ENCODE measurements at regions of chr2 and their contacts with region 1.

Region 1: GRCh38 chr2:73985308-73986084 is 786 bp downstream of the TET3 start:
- DNase-seq: peak in 4 of 5 donors; percentile 47 to 76 (median 52)
- H3K4me3 ChIP-seq: peak overlapping the region; percentile 52 to 73
- H3K4me3 Mint-ChIP-seq: peak overlapping the region; percentile 81 to 92 (median 84)
- H3K27ac ChIP-seq: peak overlapping the region; percentile 75
- H3K27ac Mint-ChIP-seq: peak overlapping the region; percentile 34 to 96 (median 87)
- H3K4me1 ChIP-seq: peaks cover 76% of the 10 kb centered on the region
- H3K4me1 Mint-ChIP-seq: peaks cover 59 to 85% (median 70%) of the 10 kb centered on the region in 4 donors
- H3K27me3 ChIP-seq: no peaks in the 10 kb centered on the region
- H3K27me3 Mint-ChIP-seq: no peaks in the 10 kb centered on the region

Region 2: DNA sequence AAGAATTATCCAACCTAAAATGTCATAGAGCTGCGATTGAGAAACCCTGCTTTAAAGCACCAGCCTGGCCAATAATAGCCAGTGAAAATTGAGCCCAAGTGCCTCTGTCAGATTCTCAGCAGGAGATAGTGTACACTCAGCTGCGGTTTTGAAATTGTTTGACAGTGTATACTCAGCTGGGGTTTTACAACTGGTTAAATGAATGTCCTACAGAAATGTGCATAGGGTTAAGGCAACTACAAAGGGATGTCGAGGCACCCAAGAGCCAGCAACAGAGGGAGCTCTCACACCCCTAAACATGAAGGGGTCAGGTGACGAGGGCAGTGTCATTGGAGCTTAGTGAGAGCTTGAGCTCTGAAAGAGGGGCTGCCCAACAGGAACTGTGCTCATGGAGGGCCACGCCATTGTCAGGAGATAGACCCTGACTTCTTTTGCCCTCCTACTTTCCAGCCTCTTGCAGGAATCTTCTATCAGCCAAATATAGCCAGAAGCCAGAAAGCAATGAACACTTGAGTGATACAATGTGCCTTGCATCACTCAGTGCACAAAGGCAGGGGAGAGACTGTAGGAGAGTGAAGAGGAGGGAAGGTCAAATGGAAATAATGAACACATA is 77.5 kb before region 1 on chr2:
- CTCF ChIA-PET with region 1: interaction called, 71 read pairs
- POLR2A ChIA-PET with region 1: interaction called, 13 read pairs
- intact Hi-C with region 1: loop called (anchors 1 kb)
- DNase-seq: peak in 4 of 5 donors; percentile 52 to 54 (median 53)
- H3K4me3 ChIP-seq: no peak overlapping the region
- H3K4me3 Mint-ChIP-seq: no peak overlapping the region
- H3K27ac ChIP-seq: no peak overlapping the region
- H3K27ac Mint-ChIP-seq: peak overlapping the region in 2 of 7 donors; percentile 62 to 72
- H3K4me1 ChIP-seq: no peaks in the 10 kb centered on the region
- H3K4me1 Mint-ChIP-seq: peaks cover 0 to 2% (median 0%) of the 10 kb centered on the region in 4 donors
- H3K27me3 ChIP-seq: no peaks in the 10 kb centered on the region
- H3K27me3 Mint-ChIP-seq: no peaks in the 10 kb centered on the region

Region 3: DNA sequence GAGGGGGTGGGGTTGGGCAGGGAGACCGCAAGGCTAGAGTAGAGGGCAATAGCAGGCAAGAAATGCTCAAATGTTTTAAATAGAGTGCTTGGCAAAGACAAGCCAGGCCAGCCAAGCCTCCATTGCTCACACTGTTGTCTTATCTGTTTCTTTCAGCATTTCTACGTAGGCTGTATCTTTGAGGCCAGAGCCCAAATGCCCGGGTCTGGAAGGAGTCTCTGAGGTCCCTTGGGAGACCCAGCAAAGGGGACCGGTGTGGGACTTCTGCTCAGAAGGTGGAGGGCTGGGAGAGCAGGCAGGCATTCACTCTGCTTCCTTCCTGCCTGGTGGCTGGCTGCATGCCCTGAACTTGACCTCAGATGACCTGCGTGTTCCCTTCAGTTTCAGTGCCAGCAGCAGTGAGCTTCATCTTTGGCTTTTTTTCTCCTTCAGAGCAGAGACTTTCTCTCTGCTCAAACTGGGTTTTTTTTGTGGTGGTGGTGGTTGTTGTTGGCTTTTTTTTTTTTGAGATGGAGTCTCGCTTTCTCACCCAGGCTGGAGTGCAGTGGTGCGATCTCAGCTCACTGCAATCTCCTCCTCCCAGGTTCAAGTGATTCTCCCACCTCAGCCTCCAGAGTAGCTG is 14.5 kb before region 1 on chr2:
- CTCF ChIA-PET with region 1: interaction called, 23 read pairs
- POLR2A ChIA-PET with region 1: interaction called, 14 read pairs
- intact Hi-C with region 1: loop called (anchors 2 kb)
- DNase-seq: peak; percentile 69 to 74 (median 71)
- H3K4me3 ChIP-seq: peak overlapping the region; percentile 32 to 33
- H3K4me3 Mint-ChIP-seq: peak overlapping the region; percentile 64 to 84 (median 74)
- H3K27ac ChIP-seq: peak overlapping the region; percentile 17
- H3K27ac Mint-ChIP-seq: peak overlapping the region; percentile 81 to 96 (median 91)
- H3K4me1 ChIP-seq: peaks cover 28% of the 10 kb centered on the region
- H3K4me1 Mint-ChIP-seq: peaks cover 26 to 55% (median 40%) of the 10 kb centered on the region in 4 donors
- H3K27me3 ChIP-seq: no peaks in the 10 kb centered on the region
- H3K27me3 Mint-ChIP-seq: no peaks in the 10 kb centered on the region

Region 4: DNA sequence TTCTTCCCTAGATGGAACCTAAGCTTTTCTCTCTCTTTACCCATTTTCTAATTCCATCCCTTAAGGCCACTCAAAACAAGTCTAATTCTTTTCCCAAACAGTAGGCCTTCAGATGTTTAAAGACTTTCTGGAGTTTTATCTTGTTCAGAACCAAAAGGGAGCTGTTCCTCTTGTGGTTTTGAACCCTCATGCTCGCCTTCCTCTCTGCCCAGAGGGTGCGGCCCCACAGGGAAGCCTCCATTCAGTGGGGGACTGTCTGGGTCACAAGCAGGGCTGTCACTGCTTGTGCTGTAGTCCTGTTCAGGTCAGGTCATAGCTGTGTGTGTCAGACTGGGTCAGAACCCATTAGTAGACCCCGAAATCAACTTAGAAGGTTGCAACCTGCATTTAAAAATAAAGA is 55.7 kb after region 1 on chr2:
- CTCF ChIA-PET with region 1: no interaction called
- POLR2A ChIA-PET with region 1: no interaction called
- intact Hi-C with region 1: no loop called
- DNase-seq: no peak
- H3K4me3 ChIP-seq: no peak overlapping the region
- H3K4me3 Mint-ChIP-seq: no peak overlapping the region
- H3K27ac ChIP-seq: no peak overlapping the region
- H3K27ac Mint-ChIP-seq: peak overlapping the region in 5 of 7 donors; percentile 54 to 84 (median 76)
- H3K4me1 ChIP-seq: peaks cover 55% of the 10 kb centered on the region
- H3K4me1 Mint-ChIP-seq: peaks cover 49 to 66% (median 62%) of the 10 kb centered on the region in 4 donors
- H3K27me3 ChIP-seq: no peaks in the 10 kb centered on the region
- H3K27me3 Mint-ChIP-seq: no peaks in the 10 kb centered on the region

Region 5: GRCh38 chr2:74052732-74053597 is 67.5 kb after region 1 on chr2:
- CTCF ChIA-PET with region 1: interaction called, 4 read pairs
- POLR2A ChIA-PET with region 1: interaction called, 12 read pairs
- intact Hi-C with region 1: no loop called
- DNase-seq: peak; percentile 33 to 49 (median 37)
- H3K4me3 ChIP-seq: no peak overlapping the region
- H3K4me3 Mint-ChIP-seq: peak overlapping the region in 7 of 8 donors; percentile 0 to 77 (median 36)
- H3K27ac ChIP-seq: no peak overlapping the region
- H3K27ac Mint-ChIP-seq: peak overlapping the region; percentile 6 to 82 (median 63)
- H3K4me1 ChIP-seq: peaks cover 20% of the 10 kb centered on the region
- H3K4me1 Mint-ChIP-seq: peaks cover 23 to 53% (median 42%) of the 10 kb centered on the region in 4 donors
- H3K27me3 ChIP-seq: no peaks in the 10 kb centered on the region
- H3K27me3 Mint-ChIP-seq: no peaks in the 10 kb centered on the region

Measured in CD4-positive, alpha-beta memory T cell (primary cell).